Activated naive CD4-positive, alpha-beta T cell treated with anti-CD3 and anti-CD28 coated beads for 36 hours (primary cell): ENCODE measurements at regions of chr17 and their contacts with region 1.

Region 1: GRCh38 chr17:59311130-59311920 is 20.1 kb upstream of the YPEL2 start:
- DNase-seq: peak; percentile 54
- H3K4me3 Mint-ChIP-seq: no peak overlapping the region
- H3K27ac Mint-ChIP-seq: no peak overlapping the region
- H3K4me1 Mint-ChIP-seq: no peaks in the 10 kb centered on the region
- H3K27me3 Mint-ChIP-seq: no peaks in the 10 kb centered on the region

Region 2: DNA sequence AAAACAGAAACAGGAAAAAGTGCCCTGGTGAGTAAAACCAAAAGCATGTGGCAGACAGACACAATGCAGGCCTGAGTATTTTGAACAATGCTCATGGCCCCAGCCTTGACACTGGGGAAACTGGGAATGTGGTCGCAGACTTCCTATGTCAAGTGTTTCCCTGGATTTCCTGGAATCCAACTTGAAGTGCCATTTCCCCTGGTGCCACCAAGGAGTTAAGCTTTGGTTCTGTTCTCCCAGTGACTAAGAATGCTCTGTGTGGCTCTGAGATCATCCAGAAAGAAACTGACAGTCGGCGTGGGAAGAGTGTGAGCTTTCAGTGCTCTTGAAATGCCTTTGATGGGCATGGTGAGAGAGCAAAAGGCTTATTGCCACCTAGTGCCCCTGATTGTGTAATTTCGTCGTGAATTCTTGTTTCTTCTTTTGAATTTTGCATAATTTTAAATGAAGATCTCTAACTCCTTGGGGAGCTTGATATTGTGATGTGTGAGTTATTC is 116.1 kb after region 1 on chr17:
- CTCF ChIA-PET with region 1: interaction called, 38 read pairs
- intact Hi-C with region 1: loop called (anchors 1 kb)
- DNase-seq: peak; percentile 83
- H3K4me3 Mint-ChIP-seq: no peak overlapping the region
- H3K27ac Mint-ChIP-seq: no peak overlapping the region
- H3K4me1 Mint-ChIP-seq: peaks cover 15% of the 10 kb centered on the region
- H3K27me3 Mint-ChIP-seq: no peaks in the 10 kb centered on the region

Region 3: DNA sequence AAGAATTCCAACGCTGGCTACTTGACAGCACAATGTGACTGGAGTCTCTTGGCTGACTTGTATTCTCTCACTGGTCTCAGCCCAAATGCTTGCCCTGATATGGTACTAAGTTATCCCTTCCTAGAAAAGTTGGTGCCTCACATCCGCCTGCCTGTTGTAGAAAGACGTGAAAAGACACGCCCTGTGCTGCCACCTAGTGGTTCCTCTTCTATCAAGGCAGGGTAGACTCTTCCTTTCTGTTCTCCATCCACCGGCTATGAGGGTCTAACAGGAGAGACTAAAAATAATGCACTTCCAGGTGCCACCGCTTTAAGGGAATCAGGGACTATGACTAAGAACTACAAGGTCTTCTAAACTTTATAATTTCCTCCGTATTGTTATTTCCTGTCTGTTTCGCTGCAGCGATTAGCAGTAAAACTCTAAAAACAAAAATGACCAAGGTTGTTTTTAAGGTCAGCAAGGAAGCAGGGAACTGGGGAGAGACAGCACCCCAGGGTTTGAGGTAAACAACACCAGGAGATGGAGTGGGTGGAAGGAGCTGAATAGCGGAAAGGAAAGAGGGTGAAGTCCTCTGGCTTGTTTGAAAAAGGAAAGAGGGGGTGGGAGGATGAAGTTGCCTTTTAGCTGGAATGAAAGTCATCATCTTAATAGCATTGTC is 129.6 kb after region 1 on chr17:
- CTCF ChIA-PET with region 1: interaction called, 101 read pairs
- intact Hi-C with region 1: loop called (anchors 1 kb)
- DNase-seq: peak; percentile 96
- H3K4me3 Mint-ChIP-seq: peak overlapping the region; percentile 58
- H3K27ac Mint-ChIP-seq: peak overlapping the region; percentile 88
- H3K4me1 Mint-ChIP-seq: peaks cover 37% of the 10 kb centered on the region
- H3K27me3 Mint-ChIP-seq: no peaks in the 10 kb centered on the region